ENCODE measurements at regions of chr7 and their contacts with region 1.

Region 1: DNA sequence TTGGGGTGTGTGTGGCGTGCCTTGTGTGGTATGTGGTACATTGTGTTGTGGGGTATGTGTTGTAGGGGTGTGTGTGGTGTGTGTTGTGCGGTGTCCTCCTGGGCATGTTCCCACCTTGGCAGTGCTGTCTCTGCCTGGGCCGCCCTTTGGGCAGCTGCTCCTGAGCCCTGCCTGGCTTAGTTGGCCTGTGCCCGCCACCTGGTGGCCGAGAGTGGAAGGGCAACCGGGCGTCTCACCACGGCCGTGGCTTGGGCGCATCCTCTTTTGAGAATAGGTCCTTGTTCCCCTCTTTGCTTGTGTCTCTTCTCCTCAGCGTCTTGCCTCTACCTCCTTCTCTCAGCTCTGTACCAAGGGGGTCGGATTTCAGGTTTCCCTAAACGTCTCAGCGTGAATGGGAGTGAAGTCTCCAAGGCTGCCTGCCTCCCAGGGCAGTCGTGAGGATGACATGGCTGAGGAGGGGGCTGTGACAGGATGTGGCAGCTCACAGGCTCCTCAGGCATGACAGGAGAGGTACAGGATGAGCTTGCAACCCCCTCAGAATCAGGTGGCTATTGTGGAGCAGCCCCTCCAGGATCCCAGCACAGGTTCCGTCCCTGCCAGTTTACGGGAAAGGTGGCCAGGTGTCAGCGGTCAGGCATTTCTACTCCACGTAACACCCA is 98.4 kb upstream of the PODXL start:
- DNase-seq: peak; percentile 86 to 87
- H3K4me3 ChIP-seq: no peak overlapping the region
- H3K27ac ChIP-seq: no peak overlapping the region
- H3K4me1 ChIP-seq: no peaks in the 10 kb centered on the region
- H3K27me3 ChIP-seq: peaks cover 0 to 6% of the 10 kb centered on the region in 2 donors
- CTCF ChIP-seq: peak; percentile 93 to 94

Region 2: DNA sequence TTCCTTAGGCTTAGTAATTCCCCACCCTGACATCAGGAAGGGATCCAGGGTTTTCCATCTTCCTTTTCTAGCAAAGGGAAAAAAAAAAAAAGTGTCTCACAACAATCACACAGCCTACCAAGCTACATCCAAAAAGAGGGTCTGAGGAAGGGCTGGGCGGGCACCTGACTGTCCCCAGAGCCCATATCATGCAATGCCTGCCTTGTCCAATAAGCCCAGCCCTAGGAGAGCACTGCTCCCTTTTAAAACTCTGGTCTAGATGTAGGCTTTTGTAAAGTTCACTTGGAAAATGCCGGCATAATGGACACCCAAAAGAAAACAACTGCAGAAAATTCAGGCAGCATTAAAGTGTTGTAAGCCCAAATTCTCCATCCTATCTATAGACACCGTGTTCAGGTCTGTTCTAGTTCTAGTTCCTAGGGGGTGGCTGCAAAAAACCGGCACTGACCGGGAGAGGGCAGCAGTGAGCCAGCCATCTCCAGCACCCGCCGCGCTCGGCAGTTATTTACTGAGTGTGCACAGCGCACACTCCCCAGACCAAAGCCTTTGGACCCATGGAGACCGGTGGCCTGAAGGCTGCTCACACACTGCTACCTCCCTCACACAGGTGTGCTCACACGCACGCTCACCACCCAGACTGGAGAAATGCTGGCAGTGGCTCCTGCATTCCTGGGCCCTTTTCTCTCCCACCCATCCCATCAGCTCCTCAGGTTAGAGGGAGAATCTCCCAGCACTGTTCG is 147.0 kb before region 1 on chr7:
- intact Hi-C with region 1: loop called (anchors 1 kb)
- DNase-seq: peak; percentile 89 to 91
- H3K4me3 ChIP-seq: no peak overlapping the region
- H3K27ac ChIP-seq: no peak overlapping the region
- H3K4me1 ChIP-seq: peaks cover 0 to 26% (median 11%) of the 10 kb centered on the region in 4 donors
- H3K27me3 ChIP-seq: peaks cover 0 to 17% of the 10 kb centered on the region in 2 donors
- CTCF ChIP-seq: peak; percentile 83 to 96